Gastrocnemius medialis (tissue), 4 donors: ENCODE measurements at regions of chr17 and their contacts with region 1.

Region 1: DNA sequence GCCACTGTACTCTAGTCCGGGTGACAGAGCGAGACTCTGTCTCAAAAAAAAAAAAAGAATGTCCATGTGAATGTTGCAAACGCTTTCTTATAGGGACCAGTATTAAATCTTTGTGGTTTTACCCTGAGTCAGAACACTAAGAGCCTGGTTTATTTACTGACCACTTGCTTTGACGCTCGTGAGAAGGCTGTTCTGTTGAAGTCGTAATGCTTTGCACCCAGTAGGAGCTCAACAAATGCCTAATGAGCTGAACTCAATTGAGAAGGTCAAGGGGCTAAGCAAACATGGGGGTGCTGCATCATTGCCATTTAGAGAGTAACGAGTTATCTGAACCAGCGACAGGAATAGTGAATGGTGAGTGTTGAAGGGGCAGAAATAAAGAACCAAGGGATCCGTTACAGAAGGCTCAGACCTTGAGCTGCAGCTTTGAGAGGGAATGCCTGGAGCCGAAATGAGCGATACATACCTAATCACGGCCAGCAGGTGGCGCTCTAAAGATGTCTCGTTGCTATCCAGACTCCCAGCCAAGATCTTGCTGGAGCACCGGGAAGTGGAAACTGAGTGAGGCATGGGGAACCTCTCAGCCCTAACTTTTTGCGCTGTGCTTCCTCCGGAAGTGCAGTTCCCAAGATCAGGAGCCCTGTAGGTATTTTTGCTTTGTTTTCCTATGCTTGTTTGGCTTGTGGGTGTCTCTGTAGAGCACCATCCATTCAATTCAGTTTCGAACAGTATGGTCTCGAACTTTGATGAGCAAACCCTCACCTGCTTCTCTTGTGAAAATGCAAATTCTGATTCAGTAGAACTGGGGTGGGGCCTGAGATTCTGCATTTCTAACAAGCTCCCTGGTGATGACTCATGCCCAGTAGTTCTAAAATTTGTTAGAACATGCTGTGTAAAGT is 12.6 kb upstream of the RNF222 start:
- DNase-seq: peak; percentile 73 to 74
- ATAC-seq: peak; percentile 94 to 97
- H3K4me3 ChIP-seq: peak overlapping the region in 1 of 4 donors; percentile 5
- H3K27ac ChIP-seq: no peak overlapping the region
- H3K4me1 ChIP-seq: peaks cover 0 to 3% of the 10 kb centered on the region in 2 donors
- H3K27me3 ChIP-seq: peaks cover 0 to 3% (median 0%) of the 10 kb centered on the region in 3 donors
- CTCF ChIP-seq: peak; percentile 76 to 89 (median 83)
- POLR2A ChIP-seq: no peak

Region 2: GRCh38 chr17:8332678-8333077 is 77.5 kb before region 1 on chr17:
- in situ Hi-C with region 1: no loop called
- intact Hi-C with region 1: no loop called
- DNase-seq: peak in 1 of 2 donors; percentile 52
- ATAC-seq: peak; percentile 76 to 82
- H3K4me3 ChIP-seq: no peak overlapping the region
- H3K27ac ChIP-seq: peak overlapping the region in 2 of 4 donors; percentile 23 to 33
- H3K4me1 ChIP-seq: no peaks in the 10 kb centered on the region
- H3K27me3 ChIP-seq: peaks cover 0 to 4% (median 0%) of the 10 kb centered on the region in 3 donors
- CTCF ChIP-seq: no peak
- POLR2A ChIP-seq: no peak

Region 3: DNA sequence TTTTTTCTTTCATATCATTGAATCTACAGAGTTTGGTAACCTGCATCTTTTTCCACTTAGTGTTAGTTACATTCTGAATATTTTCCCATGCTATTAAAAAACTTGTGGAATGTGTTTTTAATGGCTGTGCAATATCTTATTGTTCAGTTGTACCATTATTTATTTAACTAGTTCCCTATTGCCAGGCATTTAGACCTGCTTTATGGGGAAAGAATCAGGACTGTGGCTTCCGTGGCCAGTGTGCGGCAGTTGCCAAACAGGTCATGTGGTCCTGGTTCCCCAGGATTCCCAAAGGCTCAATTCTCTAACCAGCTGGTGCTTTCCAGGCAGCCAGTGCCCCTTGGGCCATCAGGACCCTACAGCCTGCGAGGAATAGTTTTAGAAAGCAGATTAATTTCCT is 56.2 kb after region 1 on chr17:
- in situ Hi-C with region 1: no loop called
- intact Hi-C with region 1: loop called (anchors 2 kb)
- DNase-seq: no peak
- ATAC-seq: no peak
- H3K4me3 ChIP-seq: no peak overlapping the region
- H3K27ac ChIP-seq: peak overlapping the region in 1 of 4 donors; percentile 50
- H3K4me1 ChIP-seq: peaks cover 30 to 38% of the 10 kb centered on the region in 2 donors
- H3K27me3 ChIP-seq: no peaks in the 10 kb centered on the region
- CTCF ChIP-seq: no peak
- POLR2A ChIP-seq: no peak

Region 4: GRCh38 chr17:8563981-8564602 is 153.9 kb after region 1 on chr17:
- in situ Hi-C with region 1: no loop called
- intact Hi-C with region 1: no loop called
- DNase-seq: no peak
- ATAC-seq: no peak
- H3K4me3 ChIP-seq: no peak overlapping the region
- H3K27ac ChIP-seq: no peak overlapping the region
- H3K4me1 ChIP-seq: no peaks in the 10 kb centered on the region
- H3K27me3 ChIP-seq: no peaks in the 10 kb centered on the region
- CTCF ChIP-seq: no peak
- POLR2A ChIP-seq: no peak

Region 5: DNA sequence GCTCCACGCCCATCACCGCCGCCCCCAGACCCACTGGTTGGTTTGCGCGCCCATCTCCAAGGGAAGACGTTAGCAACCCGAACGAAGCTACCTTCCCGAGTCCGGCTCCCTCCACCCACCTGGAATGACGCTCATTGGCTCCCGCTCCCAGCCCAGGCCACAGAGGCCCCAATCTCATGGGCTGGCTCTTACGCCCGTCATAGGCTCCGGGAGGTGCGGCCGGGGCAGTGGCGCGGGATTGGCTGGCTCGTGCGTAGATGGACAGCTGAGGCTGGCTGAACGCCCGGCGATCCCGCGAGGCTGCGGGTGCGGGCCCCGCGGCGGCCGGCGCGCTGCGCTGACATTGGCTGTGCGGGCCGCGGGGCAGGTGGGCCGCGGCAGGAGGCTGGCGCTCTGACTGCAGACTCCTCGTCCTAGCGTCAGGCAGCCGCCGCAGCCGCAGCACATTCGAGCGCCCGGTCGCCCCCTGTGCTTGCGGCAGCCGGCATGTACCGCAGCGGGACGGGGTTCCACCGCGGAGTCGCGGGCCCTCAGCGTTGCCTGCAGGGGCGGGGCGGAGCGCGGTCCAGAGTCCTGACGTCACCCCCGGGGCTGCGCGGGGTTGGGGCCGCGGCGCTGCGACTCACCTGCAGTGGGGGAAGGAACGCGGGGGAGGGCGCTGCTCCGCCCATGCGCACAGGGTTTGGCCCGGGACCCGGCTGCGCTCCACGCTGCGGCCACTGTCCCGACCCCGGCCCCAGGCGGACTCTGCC is 220.8 kb after region 1 on chr17:
- in situ Hi-C with region 1: loop called in 1 of 4 experiments (anchors 25 kb)
- intact Hi-C with region 1: no loop called
- DNase-seq: peak; percentile 94 to 95
- ATAC-seq: peak; percentile 97 to 98
- H3K4me3 ChIP-seq: peak overlapping the region; percentile 80 to 96 (median 92)
- H3K27ac ChIP-seq: peak overlapping the region; percentile 71 to 80 (median 74)
- H3K4me1 ChIP-seq: peaks cover 0 to 10% of the 10 kb centered on the region in 2 donors
- H3K27me3 ChIP-seq: peaks cover 0 to 6% (median 0%) of the 10 kb centered on the region in 3 donors
- CTCF ChIP-seq: peak in 2 of 5 experiments; percentile 18 to 21
- POLR2A ChIP-seq: peak; percentile 9 to 13

Region 6: GRCh38 chr17:8745586-8746500 is 335.6 kb after region 1 on chr17:
- in situ Hi-C with region 1: loop called (anchors 5 to 10 kb)
- intact Hi-C with region 1: loop called (anchors 1 kb)
- DNase-seq: peak; percentile 21 to 22
- ATAC-seq: peak; percentile 66 to 73
- H3K4me3 ChIP-seq: peak overlapping the region; percentile 62 to 73 (median 66)
- H3K27ac ChIP-seq: peak overlapping the region in 1 of 4 donors; percentile 33
- H3K4me1 ChIP-seq: peaks cover 0 to 10% of the 10 kb centered on the region in 2 donors
- H3K27me3 ChIP-seq: peaks cover 0 to 2% (median 0%) of the 10 kb centered on the region in 3 donors
- CTCF ChIP-seq: peak; percentile 46 to 96 (median 82)
- POLR2A ChIP-seq: no peak